Stomach (tissue), 19 donors: ENCODE measurements at regions of chr7 and their contacts with region 1.

Region 1: GRCh38 chr7:150420987-150421674 is 29.3 kb upstream of the GIMAP8 start:
- DNase-seq: peak; percentile 90 to 94
- H3K4me3 ChIP-seq: no peak overlapping the region
- H3K27ac ChIP-seq: no peak overlapping the region
- H3K4me1 ChIP-seq: peaks cover 0 to 9% (median 4%) of the 10 kb centered on the region in 4 donors
- H3K27me3 ChIP-seq: no peaks in the 10 kb centered on the region
- CTCF ChIP-seq: peak in 5 of 7 experiments; percentile 73 to 88 (median 77)
- EP300 ChIP-seq: no peak
- POLR2A ChIP-seq: no peak

Region 2: GRCh38 chr7:149714050-149714909 is 706.9 kb before region 1 on chr7:
- intact Hi-C with region 1: no loop called
- DNase-seq: peak; percentile 93 to 97
- H3K4me3 ChIP-seq: peak overlapping the region; percentile 71 to 82 (median 80)
- H3K27ac ChIP-seq: peak overlapping the region in 4 of 5 donors; percentile 27 to 86 (median 78)
- H3K4me1 ChIP-seq: peaks cover 21 to 43% (median 29%) of the 10 kb centered on the region in 4 donors
- H3K27me3 ChIP-seq: no peaks in the 10 kb centered on the region
- CTCF ChIP-seq: no peak
- EP300 ChIP-seq: no peak
- POLR2A ChIP-seq: no peak

Region 3: DNA sequence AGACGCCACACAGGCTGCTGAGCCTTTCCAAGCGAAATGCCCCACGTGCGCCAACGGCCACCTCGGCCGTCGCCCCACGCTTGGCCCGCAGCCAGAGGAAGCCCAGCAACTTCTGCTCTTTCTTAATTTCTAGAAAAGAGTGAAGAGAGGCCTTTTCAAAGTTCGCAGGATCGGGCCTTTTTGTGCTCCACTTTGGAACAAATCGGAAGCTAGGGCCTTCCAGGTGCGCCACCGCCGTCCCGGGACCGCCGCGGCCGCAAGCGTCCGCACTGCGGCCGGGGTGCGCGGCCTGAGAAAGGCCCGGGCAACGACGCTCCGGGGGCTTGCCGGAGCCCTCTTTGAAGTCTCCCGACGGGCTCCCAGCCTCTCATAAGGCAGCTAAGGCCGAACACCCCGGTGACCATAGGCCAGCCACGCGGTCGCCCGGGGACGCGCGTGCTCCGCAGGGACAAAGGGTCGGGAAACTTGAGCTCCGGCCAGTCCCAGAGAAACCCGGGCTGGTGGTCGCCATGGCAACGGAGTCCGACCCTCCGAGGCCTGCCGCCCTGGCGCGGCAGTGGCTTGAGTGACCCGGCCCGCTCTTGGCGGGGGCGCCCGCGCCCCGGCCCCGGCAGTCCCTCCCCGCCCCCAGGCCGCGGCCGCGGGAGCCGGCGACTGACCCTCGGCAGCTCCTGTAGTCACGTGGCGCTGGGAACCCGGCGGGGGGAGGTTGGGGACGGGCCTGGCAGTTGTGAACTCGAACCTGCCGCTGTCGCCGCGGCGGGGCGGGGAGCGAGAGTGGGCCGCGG is 52.8 kb before region 1 on chr7 and contains the start of gene REPIN1:
- intact Hi-C with region 1: loop called (anchors 10 kb)
- DNase-seq: peak; percentile 92 to 96
- H3K4me3 ChIP-seq: peak within 1 kb of the TSS; percentile 71 to 95 (median 84)
- H3K27ac ChIP-seq: peak within 1 kb of the TSS; percentile 87 to 97 (median 94)
- H3K4me1 ChIP-seq: peaks cover 31 to 60% (median 53%) of the 10 kb centered on the region in 4 donors
- H3K27me3 ChIP-seq: no peaks in the 10 kb centered on the region
- CTCF ChIP-seq: no peak
- EP300 ChIP-seq: no peak
- POLR2A ChIP-seq: no peak
- total RNA-seq, gene REPIN1: 44.2 to 298 (median 104) TPM

Region 4: DNA sequence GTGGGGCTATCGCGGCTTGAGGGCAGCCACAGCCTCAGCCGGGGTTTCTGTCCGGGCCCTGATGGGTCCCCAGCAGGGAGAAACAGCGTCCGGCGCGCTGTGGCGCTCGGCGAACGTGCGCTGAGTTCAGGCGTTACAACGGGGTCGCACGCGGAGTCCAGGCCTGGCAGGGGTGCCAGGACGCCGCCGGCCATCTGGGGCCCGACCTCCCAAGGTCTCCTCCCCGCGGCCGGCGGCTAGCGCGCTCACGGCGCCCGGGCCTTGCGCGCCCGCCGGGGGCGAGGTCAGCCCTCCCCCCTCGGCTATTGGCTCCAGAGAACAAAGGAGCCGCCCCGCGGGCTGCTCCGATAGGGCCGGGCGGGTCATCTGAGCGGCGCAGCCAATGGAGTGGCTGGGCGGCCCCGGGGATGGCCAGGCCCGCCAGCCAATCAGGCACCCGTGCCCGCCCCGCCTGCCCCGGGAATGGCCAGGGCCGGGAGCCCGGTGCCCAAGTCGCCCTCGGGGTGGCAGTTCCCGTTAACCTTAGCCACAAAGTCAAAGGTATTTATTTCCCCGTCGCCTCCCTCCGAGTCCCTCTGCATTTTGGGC is 42.2 kb before region 1 on chr7 and contains the start of gene ZNF775:
- intact Hi-C with region 1: no loop called
- DNase-seq: peak; percentile 97 to 98
- H3K4me3 ChIP-seq: peak within 1 kb of the TSS; percentile 70 to 97 (median 93)
- H3K27ac ChIP-seq: peak within 1 kb of the TSS; percentile 87 to 96 (median 91)
- H3K4me1 ChIP-seq: peaks cover 13 to 80% (median 61%) of the 10 kb centered on the region in 4 donors
- H3K27me3 ChIP-seq: no peaks in the 10 kb centered on the region
- CTCF ChIP-seq: no peak
- EP300 ChIP-seq: no peak
- POLR2A ChIP-seq: no peak
- total RNA-seq, gene ZNF775: 2.0 to 17.0 (median 14.8) TPM in 3 of 5 donors, not detected in the others

Region 5: GRCh38 chr7:150448789-150449147 is 27.6 kb after region 1 on chr7:
- intact Hi-C with region 1: no loop called
- DNase-seq: peak; percentile 82 to 88
- H3K4me3 ChIP-seq: no peak overlapping the region
- H3K27ac ChIP-seq: peak overlapping the region in 3 of 5 donors; percentile 70 to 86 (median 78)
- H3K4me1 ChIP-seq: peaks cover 0 to 22% (median 11%) of the 10 kb centered on the region in 4 donors
- H3K27me3 ChIP-seq: peaks cover 0 to 18% (median 6%) of the 10 kb centered on the region in 3 donors
- CTCF ChIP-seq: peak in 5 of 7 experiments; percentile 57 to 89 (median 85)
- EP300 ChIP-seq: no peak
- POLR2A ChIP-seq: no peak

Region 6: GRCh38 chr7:150610233-150610632 is 189.1 kb after region 1 on chr7:
- intact Hi-C with region 1: no loop called
- DNase-seq: no peak
- H3K4me3 ChIP-seq: no peak overlapping the region
- H3K27ac ChIP-seq: no peak overlapping the region
- H3K4me1 ChIP-seq: no peaks in the 10 kb centered on the region
- H3K27me3 ChIP-seq: no peaks in the 10 kb centered on the region
- CTCF ChIP-seq: no peak
- EP300 ChIP-seq: no peak
- POLR2A ChIP-seq: no peak